Activated naive CD4-positive, alpha-beta T cell treated with anti-CD3 and anti-CD28 coated beads, Interleukin-2, amount 10 ng/mL, durations not matched to agents 7 days and 5 days (primary cell): ENCODE measurements at regions of chr12 and their contacts with region 1.

Region 1: GRCh38 chr12:12376646-12377448 is 20.0 kb downstream of the BORCS5 start:
- DNase-seq: peak; percentile 35
- H3K4me3 Mint-ChIP-seq: no peak overlapping the region
- H3K27ac Mint-ChIP-seq: peak overlapping the region; percentile 65
- H3K4me1 Mint-ChIP-seq: peaks cover 53% of the 10 kb centered on the region
- H3K27me3 Mint-ChIP-seq: no peaks in the 10 kb centered on the region

Region 2: GRCh38 chr12:12138203-12139154 is 238.4 kb before region 1 on chr12:
- CTCF ChIA-PET with region 1: no interaction called
- DNase-seq: no peak
- H3K4me3 Mint-ChIP-seq: no peak overlapping the region
- H3K27ac Mint-ChIP-seq: no peak overlapping the region
- H3K4me1 Mint-ChIP-seq: no peaks in the 10 kb centered on the region
- H3K27me3 Mint-ChIP-seq: peaks cover 9% of the 10 kb centered on the region

Region 3: DNA sequence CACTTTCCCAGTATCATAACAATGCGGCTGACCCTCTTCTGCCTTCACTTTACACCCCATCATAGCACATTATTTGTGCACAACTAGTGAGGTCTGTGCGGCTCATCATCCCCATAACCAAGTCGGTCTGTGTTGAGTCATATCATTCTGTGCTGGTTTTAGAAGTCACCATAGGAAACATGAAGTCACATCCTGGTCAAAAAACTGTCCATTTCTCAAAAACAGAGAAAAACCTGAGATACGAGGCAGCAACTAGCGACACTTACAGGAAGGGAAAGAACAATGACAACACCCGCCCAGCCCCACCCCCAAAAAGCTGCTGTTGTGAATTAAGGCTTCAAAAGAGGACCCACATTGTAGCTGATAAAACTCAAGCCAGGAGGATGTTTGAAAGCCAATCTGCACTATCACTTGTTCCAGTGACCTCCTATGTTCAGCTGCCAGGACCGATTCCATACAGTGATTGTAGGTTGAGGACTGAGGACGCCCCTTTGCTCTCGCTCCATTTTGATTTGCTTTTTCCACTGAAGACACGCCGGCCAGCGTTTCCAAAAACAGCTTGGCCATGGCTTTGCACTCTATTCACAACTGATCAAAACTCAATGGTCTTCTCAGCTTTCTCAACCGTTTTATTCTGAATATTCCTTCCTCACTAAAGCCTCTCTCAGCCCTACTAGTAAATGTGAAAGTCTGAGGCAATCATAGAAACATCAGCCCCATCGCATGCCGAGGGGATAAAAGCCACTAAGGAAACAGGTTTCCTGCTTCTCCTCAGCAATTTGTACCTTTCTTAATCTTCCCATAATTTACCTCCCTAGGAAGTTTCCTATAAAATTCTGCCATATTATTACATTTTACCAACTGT is 98.3 kb after region 1 on chr12:
- CTCF ChIA-PET with region 1: interaction called, 58 read pairs
- DNase-seq: peak; percentile 56
- H3K4me3 Mint-ChIP-seq: peak overlapping the region; percentile 43
- H3K27ac Mint-ChIP-seq: peak overlapping the region; percentile 96
- H3K4me1 Mint-ChIP-seq: peaks cover 64% of the 10 kb centered on the region
- H3K27me3 Mint-ChIP-seq: no peaks in the 10 kb centered on the region

Region 4: GRCh38 chr12:12606781-12607589 is 230.1 kb after region 1 on chr12:
- CTCF ChIA-PET with region 1: interaction called, 24 read pairs
- DNase-seq: no peak
- H3K4me3 Mint-ChIP-seq: no peak overlapping the region
- H3K27ac Mint-ChIP-seq: no peak overlapping the region
- H3K4me1 Mint-ChIP-seq: peaks cover 26% of the 10 kb centered on the region
- H3K27me3 Mint-ChIP-seq: peaks cover 6% of the 10 kb centered on the region

Region 5: GRCh38 chr12:12704593-12705230 is 327.9 kb after region 1 on chr12:
- CTCF ChIA-PET with region 1: interaction called, 29 read pairs
- DNase-seq: peak; percentile 58
- H3K4me3 Mint-ChIP-seq: no peak overlapping the region
- H3K27ac Mint-ChIP-seq: peak overlapping the region; percentile 69
- H3K4me1 Mint-ChIP-seq: peaks cover 14% of the 10 kb centered on the region
- H3K27me3 Mint-ChIP-seq: no peaks in the 10 kb centered on the region